ENCODE measurements at regions of chr5 and their contacts with region 1.

Region 1: GRCh38 chr5:120457839-120458507 is 6.1 kb upstream of the PRR16 start:
- DNase-seq: peak; percentile 46
- ATAC-seq: peak; percentile 98
- H3K4me3 ChIP-seq: peak overlapping the region; percentile 15 to 70 (median 60); a peak in 5 of 6 replicates
- H3K27ac ChIP-seq: no peak overlapping the region
- H3K4me1 ChIP-seq: 0 out of 2 replicates have a peak, but pooled peaks cover 5% of the 10 kb centered on the region
- H3K27me3 ChIP-seq: peaks cover 0 to 3% of the 10 kb centered on the region in 2 experiments; a peak in 2 of 5 replicates
- CTCF ChIP-seq: peak; percentile 90
- EP300 ChIP-seq: no peak
- POLR2A ChIP-seq: no peak
- RAD21 ChIP-seq: peak; percentile 78

Region 2: DNA sequence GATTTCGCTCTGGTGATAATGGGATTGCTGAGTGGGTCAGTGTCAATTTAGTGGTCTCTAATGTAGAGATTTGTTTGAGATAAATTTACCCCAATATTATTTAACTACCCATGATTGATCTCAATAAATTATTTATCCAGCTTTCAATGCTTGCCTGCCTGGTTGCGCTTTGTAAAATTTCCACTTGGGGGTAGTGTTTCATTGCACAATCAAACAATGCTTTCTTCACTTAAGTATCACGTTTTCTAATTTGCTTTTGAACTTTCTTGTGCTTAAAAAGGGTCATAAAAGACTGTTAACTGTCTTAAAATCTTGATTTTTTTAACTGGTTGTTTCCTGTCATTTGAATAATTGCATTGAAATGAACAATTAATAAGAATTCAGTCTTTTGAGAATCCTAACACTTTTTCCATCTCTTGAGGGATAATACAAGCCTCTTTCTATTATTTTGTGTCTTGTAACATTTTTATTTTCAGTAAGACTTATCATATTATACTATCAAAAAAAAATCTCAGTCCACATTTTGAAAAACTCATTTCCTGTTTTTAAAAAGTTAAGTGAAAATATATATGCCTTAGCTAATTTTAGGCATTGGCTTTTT is 987.0 kb before region 1 on chr5:
- CTCF ChIA-PET with region 1: no interaction called
- POLR2A ChIA-PET with region 1: no interaction called
- in situ Hi-C with region 1: loop called (anchors 10 kb)
- intact Hi-C with region 1: loop called (anchors 5 kb)
- DNase-seq: peak; percentile 8
- ATAC-seq: no peak
- H3K4me3 ChIP-seq: no peak overlapping the region
- H3K27ac ChIP-seq: no peak overlapping the region
- H3K4me1 ChIP-seq: peaks cover 14% of the 10 kb centered on the region
- H3K27me3 ChIP-seq: no peaks in the 10 kb centered on the region
- CTCF ChIP-seq: peak; percentile 61
- EP300 ChIP-seq: no peak
- POLR2A ChIP-seq: no peak
- RAD21 ChIP-seq: no peak

Region 3: DNA sequence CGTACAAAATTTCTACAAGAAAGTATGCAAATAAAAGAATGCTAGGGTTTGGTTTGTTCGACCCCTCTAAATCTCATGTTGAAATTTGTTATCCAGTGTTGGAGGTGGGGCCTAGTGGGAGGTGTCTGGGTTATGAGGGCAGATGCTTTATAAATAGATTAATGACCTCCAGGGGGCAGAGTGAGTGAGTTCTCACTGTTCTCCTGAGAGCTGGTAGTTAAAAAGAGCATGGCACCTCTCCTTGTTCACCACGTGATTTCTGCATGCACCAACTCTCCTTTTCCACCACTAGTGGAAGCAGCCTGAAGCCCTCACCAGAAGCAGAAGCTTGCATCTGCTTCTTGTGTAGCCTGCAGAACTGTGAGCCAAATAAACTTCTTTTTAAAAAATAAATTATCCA is 879.0 kb before region 1 on chr5:
- CTCF ChIA-PET with region 1: no interaction called
- POLR2A ChIA-PET with region 1: no interaction called
- in situ Hi-C with region 1: no loop called
- intact Hi-C with region 1: loop called (anchors 2 kb)
- DNase-seq: peak; percentile 63
- ATAC-seq: peak; percentile 95
- H3K4me3 ChIP-seq: no peak overlapping the region
- H3K27ac ChIP-seq: no peak overlapping the region
- H3K4me1 ChIP-seq: no peaks in the 10 kb centered on the region
- H3K27me3 ChIP-seq: no peaks in the 10 kb centered on the region; a peak in 1 of 5 replicates
- CTCF ChIP-seq: peak; percentile 36; the same call in 1 of the 2 replicates
- EP300 ChIP-seq: no peak
- POLR2A ChIP-seq: no peak
- RAD21 ChIP-seq: no peak

Region 4: DNA sequence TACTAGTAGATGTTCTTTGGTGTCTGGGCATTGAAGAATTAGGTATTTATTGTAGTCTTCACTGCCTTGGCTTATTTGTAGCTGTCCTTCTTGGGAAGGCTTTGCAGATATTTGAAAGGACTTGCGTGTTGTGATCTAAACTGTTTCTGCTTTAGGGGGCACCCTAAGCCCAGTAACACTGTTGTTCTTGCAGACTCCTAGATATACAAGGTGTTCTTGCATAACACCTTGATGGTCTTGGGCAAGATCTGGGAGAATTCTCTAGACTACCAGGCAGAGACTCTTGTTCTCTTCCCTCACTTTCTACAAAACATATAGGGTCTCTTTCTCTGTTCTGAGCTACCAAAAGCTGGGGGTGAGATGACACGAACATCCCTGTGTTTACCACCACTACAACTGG is 649.5 kb before region 1 on chr5:
- CTCF ChIA-PET with region 1: no interaction called
- POLR2A ChIA-PET with region 1: no interaction called
- in situ Hi-C with region 1: no loop called
- intact Hi-C with region 1: loop called (anchors 2 kb)
- DNase-seq: peak; percentile 4
- ATAC-seq: peak; percentile 31; the same call in 2 of the 3 replicates
- H3K4me3 ChIP-seq: no peak overlapping the region
- H3K27ac ChIP-seq: no peak overlapping the region
- H3K4me1 ChIP-seq: no peaks in the 10 kb centered on the region
- H3K27me3 ChIP-seq: no peaks in the 10 kb centered on the region
- CTCF ChIP-seq: peak; percentile 30
- EP300 ChIP-seq: no peak
- POLR2A ChIP-seq: no peak
- RAD21 ChIP-seq: no peak

Region 5: GRCh38 chr5:120365656-120366446 is 92.1 kb before region 1 on chr5:
- CTCF ChIA-PET with region 1: no interaction called
- POLR2A ChIA-PET with region 1: no interaction called
- in situ Hi-C with region 1: no loop called
- intact Hi-C with region 1: no loop called
- DNase-seq: no peak
- ATAC-seq: no peak
- H3K4me3 ChIP-seq: no peak overlapping the region
- H3K27ac ChIP-seq: no peak overlapping the region
- H3K4me1 ChIP-seq: no peaks in the 10 kb centered on the region
- H3K27me3 ChIP-seq: no peaks in the 10 kb centered on the region
- CTCF ChIP-seq: no peak
- EP300 ChIP-seq: no peak
- POLR2A ChIP-seq: no peak
- RAD21 ChIP-seq: no peak